ENCODE measurements at regions of chr16 and their contacts with region 1.

Region 1: GRCh38 chr16:58814348-58814801 is 80.3 kb upstream of the GOT2 start:
- DNase-seq: peak; percentile 56
- H3K4me3 ChIP-seq: peak overlapping the region; percentile 27
- H3K27ac ChIP-seq: no peak overlapping the region
- H3K4me1 ChIP-seq: no peaks in the 10 kb centered on the region
- H3K27me3 ChIP-seq: no peaks in the 10 kb centered on the region
- CTCF ChIP-seq: peak; percentile 91

Region 2: DNA sequence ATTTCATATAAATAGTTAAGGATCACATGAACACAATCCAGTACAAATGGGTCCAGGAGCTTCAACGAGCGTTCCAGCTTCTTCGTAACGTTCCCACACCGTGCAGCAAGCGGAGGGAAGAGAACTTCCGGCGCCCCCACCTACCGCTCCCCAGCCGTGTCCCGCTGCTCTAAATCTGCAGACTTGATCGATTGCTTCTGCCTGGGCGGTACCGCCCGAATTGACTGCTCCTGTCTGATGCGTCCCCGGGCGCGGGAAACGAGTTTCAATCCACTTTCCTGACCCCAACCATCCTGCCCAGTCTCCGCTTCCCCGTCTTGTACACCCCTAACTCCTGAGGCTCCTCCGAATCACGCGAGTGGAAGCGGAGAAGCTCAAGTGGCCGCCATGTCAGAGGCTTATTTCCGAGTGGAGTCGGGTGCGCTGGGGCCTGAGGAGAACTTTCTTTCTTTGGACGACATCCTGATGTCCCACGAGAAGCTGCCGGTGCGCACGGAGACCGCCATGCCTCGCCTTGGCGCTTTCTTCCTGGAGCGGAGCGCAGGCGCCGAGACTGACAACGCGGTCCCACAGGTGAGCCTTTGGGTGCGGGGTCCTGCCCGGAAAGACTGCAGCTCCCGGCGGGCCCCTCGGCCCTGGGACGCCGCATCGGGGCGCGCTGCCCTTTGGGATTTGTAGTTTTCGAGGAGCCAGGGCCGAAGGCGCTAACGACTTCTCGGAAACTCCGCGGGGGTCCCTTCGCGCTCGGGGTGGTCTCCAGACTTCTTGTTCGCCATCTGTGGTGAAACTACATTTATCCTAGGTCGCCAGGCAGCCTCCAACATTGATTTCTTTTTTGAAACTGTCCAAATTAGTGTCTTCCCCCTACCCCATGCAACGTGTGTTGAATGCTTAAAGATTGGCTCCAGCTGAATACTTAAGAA is 421.9 kb before region 1 on chr16 and contains the start of gene GINS3:
- CTCF ChIA-PET with region 1: no interaction called
- POLR2A ChIA-PET with region 1: interaction called, 14 read pairs
- intact Hi-C with region 1: no loop called
- DNase-seq: peak; percentile 95
- H3K4me3 ChIP-seq: peak within 1 kb of the TSS; percentile 75
- H3K27ac ChIP-seq: peak within 1 kb of the TSS; percentile 89
- H3K4me1 ChIP-seq: no peaks in the 10 kb centered on the region
- H3K27me3 ChIP-seq: no peaks in the 10 kb centered on the region
- CTCF ChIP-seq: no peak
- total RNA-seq, gene GINS3: 22.0 and 22.2 TPM in 2 replicates

Region 3: GRCh38 chr16:58638148-58639036 is 176.0 kb before region 1 on chr16:
- CTCF ChIA-PET with region 1: no interaction called
- POLR2A ChIA-PET with region 1: no interaction called
- intact Hi-C with region 1: no loop called
- DNase-seq: peak; percentile 35
- H3K4me3 ChIP-seq: no peak overlapping the region
- H3K27ac ChIP-seq: no peak overlapping the region
- H3K4me1 ChIP-seq: no peaks in the 10 kb centered on the region
- H3K27me3 ChIP-seq: no peaks in the 10 kb centered on the region
- CTCF ChIP-seq: peak; percentile 41

Measured in A673 (cell line).